Ascending aorta (tissue), 2 donors: ENCODE measurements at regions of chr1 and their contacts with region 1.

Region 1: GRCh38 chr1:170664828-170665612 is 1.1 kb downstream of the PRRX1 start:
- DNase-seq: peak in 1 of 2 donors; percentile 79
- H3K4me3 ChIP-seq: peak overlapping the region; percentile 75 to 77
- H3K27ac ChIP-seq: peak overlapping the region; percentile 82 to 95
- H3K4me1 ChIP-seq: peaks cover 0 to 3% of the 10 kb centered on the region in 2 donors
- H3K27me3 ChIP-seq: no peaks in the 10 kb centered on the region
- CTCF ChIP-seq: peak in 2 of 3 experiments; percentile 38 to 52

Region 2: GRCh38 chr1:170010443-170010842 is 654.6 kb before region 1 on chr1:
- intact Hi-C with region 1: loop called (anchors 5 kb)
- DNase-seq: no peak
- H3K4me3 ChIP-seq: no peak overlapping the region
- H3K27ac ChIP-seq: no peak overlapping the region
- H3K4me1 ChIP-seq: no peaks in the 10 kb centered on the region
- H3K27me3 ChIP-seq: no peaks in the 10 kb centered on the region
- CTCF ChIP-seq: peak in 2 of 3 experiments; percentile 31 to 52

Region 3: GRCh38 chr1:170410401-170411166 is 254.4 kb before region 1 on chr1:
- intact Hi-C with region 1: loop called (anchors 2 kb)
- DNase-seq: no peak
- H3K4me3 ChIP-seq: no peak overlapping the region
- H3K27ac ChIP-seq: peak overlapping the region; percentile 85 to 90
- H3K4me1 ChIP-seq: peaks cover 3 to 27% of the 10 kb centered on the region in 2 donors
- H3K27me3 ChIP-seq: no peaks in the 10 kb centered on the region
- CTCF ChIP-seq: no peak

Region 4: GRCh38 chr1:170562646-170563338 is 102.2 kb before region 1 on chr1:
- intact Hi-C with region 1: loop called (anchors 10 kb)
- DNase-seq: peak; percentile 53 to 82
- H3K4me3 ChIP-seq: peak overlapping the region; percentile 17 to 48
- H3K27ac ChIP-seq: peak overlapping the region; percentile 74 to 78
- H3K4me1 ChIP-seq: peaks cover 4 to 23% of the 10 kb centered on the region in 2 donors
- H3K27me3 ChIP-seq: no peaks in the 10 kb centered on the region
- CTCF ChIP-seq: no peak

Region 5: DNA sequence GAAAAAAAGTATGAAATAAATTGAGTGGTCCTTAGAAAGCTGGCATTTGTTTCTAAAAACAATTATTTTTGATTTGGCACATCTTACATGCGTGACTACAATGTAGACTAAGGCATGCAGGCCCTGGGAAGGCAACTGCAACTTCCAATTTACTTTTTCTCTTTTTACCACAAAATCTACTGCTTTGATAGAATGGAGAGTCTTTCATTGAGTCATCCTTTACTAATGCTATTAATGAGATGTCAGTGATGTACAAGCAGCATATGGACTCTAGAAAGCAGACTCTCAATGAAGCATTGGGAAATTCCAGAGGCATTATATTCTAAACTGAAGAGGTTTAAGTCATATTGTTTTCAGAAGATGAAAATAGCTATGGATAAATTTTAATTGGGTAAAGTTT is 30.7 kb before region 1 on chr1:
- intact Hi-C with region 1: no loop called
- DNase-seq: no peak
- H3K4me3 ChIP-seq: no peak overlapping the region
- H3K27ac ChIP-seq: no peak overlapping the region
- H3K4me1 ChIP-seq: no peaks in the 10 kb centered on the region
- H3K27me3 ChIP-seq: no peaks in the 10 kb centered on the region
- CTCF ChIP-seq: no peak

Region 6: GRCh38 chr1:170692866-170693575 is 28.0 kb after region 1 on chr1:
- intact Hi-C with region 1: loop called (anchors 2 kb)
- DNase-seq: no peak
- H3K4me3 ChIP-seq: no peak overlapping the region
- H3K27ac ChIP-seq: peak overlapping the region; percentile 54 to 79
- H3K4me1 ChIP-seq: peaks cover 13 to 41% of the 10 kb centered on the region in 2 donors
- H3K27me3 ChIP-seq: no peaks in the 10 kb centered on the region
- CTCF ChIP-seq: no peak

Region 7: DNA sequence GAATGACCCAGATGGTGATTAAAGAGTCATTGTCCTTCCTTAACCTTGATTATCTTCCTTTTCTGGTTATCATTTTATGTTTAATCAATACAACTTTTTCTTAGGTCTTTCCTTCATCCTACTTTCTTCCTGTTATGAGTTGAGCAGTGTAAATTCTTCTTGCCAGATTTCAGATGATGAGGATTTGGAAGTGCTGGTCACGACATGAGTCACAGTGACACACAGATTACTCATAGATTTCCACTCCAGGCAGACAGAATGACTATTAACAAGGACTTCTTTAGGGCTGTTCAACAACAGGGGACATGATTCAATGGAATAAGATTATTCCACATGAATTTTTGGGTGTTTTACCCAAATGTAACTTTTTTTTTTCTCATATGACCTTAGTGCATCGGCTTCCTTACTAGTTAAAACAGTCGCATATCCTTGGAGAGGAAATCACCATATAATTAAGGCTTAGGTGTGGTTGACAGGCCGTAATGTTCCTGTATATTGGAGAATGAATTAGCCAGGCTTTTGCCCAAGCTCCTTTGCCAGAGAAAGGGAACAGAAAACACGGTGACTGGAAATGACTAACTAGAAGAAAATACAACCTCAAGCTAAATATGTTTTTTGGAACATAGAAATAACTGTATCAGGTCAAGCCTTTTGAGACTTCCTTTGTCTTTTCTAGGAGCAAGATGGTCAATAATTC is 43.1 kb after region 1 on chr1:
- intact Hi-C with region 1: no loop called
- DNase-seq: peak in 1 of 2 donors; percentile 82
- H3K4me3 ChIP-seq: no peak overlapping the region
- H3K27ac ChIP-seq: peak overlapping the region; percentile 91 to 92
- H3K4me1 ChIP-seq: peaks cover 16 to 58% of the 10 kb centered on the region in 2 donors
- H3K27me3 ChIP-seq: no peaks in the 10 kb centered on the region
- CTCF ChIP-seq: no peak